AG04450 (cell line): ENCODE measurements at regions of chr10 and their contacts with region 1.

Region 1: GRCh38 chr10:45235798-45236231 is 79.6 kb downstream of the OR13A1 start:
- DNase-seq: no peak
- H3K4me3 ChIP-seq: no peak overlapping the region
- H3K27ac ChIP-seq: no peak overlapping the region
- H3K27me3 ChIP-seq: no peaks in the 10 kb centered on the region
- CTCF ChIP-seq: no peak

Region 2: DNA sequence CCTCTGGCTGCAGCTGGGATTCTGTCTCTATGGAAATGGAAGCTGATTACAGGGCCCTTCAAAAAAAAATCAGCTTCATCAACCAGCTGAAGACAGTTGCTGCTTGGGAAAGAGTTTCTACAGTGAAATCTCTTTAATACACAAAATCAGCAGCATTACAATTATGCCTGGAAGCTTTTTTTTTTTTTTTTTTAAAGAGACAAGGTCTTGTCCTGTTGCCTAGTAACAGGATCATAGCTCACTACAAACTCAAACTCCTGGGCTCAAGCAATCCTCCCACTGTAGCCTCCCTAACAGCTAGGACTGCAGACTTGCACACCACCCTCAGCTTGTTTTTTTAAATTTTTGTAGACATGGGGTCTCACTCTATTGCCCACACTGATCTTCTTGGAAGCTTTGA is 14.9 kb before region 1 on chr10:
- CTCF ChIA-PET with region 1: interaction called, 15 read pairs
- POLR2A ChIA-PET with region 1: interaction called, 4 read pairs
- DNase-seq: no peak
- H3K4me3 ChIP-seq: no peak overlapping the region
- H3K27ac ChIP-seq: no peak overlapping the region
- H3K27me3 ChIP-seq: no peaks in the 10 kb centered on the region
- CTCF ChIP-seq: no peak

Region 3: DNA sequence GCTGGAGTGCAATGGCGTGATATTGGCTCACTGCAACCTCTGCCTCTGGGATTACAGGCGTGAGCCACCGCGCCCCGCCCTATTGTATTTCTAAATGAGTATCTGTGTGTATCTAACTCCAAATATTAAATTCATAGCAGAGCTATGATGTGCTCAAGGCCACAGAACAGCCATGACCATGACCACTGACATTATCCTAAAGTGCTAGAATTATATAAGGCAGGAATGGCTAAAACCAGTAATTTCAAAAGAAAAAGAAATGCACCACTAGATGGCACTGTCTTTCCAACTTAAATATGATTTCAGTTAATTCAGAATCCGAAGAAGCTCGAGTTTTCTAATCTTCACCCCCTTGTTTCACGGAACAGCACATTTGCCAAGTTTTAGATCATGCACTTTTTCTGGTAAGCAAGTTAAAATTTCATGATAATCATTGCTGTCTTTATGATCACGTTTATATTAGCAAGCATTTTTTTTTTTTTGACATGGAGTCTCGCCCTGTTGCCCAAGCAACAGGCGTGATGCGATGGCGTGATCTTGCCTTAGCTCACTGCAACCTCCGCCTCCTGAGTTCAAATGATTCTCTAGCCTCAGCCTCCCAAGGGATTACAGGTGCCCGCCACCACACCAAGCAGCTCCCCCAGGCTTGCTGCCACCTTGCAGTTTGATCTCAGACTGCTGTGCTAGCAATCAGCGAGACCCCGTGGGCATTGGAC is 14.3 kb after region 1 on chr10:
- CTCF ChIA-PET with region 1: interaction called, 11 read pairs
- POLR2A ChIA-PET with region 1: no interaction called
- DNase-seq: no peak
- H3K4me3 ChIP-seq: no peak overlapping the region
- H3K27ac ChIP-seq: no peak overlapping the region
- H3K27me3 ChIP-seq: peaks cover 7% of the 10 kb centered on the region
- CTCF ChIP-seq: peak; percentile 48

Region 4: DNA sequence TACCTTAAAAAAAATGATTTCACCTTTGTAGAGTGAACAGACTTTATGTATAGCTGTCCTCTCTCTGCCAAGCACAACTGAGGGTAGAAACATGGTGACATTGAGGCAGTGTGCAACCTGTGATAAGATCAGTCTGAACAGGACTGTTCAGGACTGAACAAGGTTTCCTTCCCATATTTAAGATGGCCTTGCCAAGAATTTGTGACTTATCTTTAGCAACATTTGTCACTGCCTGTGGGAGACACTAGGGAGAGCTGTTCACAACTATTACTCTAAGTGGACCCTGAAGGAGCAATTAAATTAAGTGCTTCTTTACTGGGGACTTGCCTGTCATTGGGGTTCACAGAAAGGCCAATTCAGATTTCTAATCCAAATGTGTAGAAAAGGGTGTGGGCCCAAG is 72.9 kb after region 1 on chr10:
- CTCF ChIA-PET with region 1: no interaction called
- POLR2A ChIA-PET with region 1: no interaction called
- DNase-seq: no peak
- H3K4me3 ChIP-seq: no peak overlapping the region
- H3K27ac ChIP-seq: no peak overlapping the region
- H3K27me3 ChIP-seq: no peaks in the 10 kb centered on the region
- CTCF ChIP-seq: no peak